CD4-positive, alpha-beta T cell (primary cell): ENCODE measurements at regions of chr15 and their contacts with region 1.

Region 1: GRCh38 chr15:100264994-100265673 is 76.6 kb downstream of the ADAMTS17 start:
- DNase-seq: no peak
- ATAC-seq: no peak
- H3K4me3 ChIP-seq: no peak overlapping the region
- H3K4me3 Mint-ChIP-seq: no peak overlapping the region
- H3K27ac ChIP-seq: no peak overlapping the region
- H3K27ac Mint-ChIP-seq: no peak overlapping the region
- H3K4me1 ChIP-seq: no peaks in the 10 kb centered on the region
- H3K4me1 Mint-ChIP-seq: no peaks in the 10 kb centered on the region
- H3K27me3 ChIP-seq: no peaks in the 10 kb centered on the region
- H3K27me3 Mint-ChIP-seq: no peaks in the 10 kb centered on the region
- CTCF ChIP-seq: no peak

Region 2: DNA sequence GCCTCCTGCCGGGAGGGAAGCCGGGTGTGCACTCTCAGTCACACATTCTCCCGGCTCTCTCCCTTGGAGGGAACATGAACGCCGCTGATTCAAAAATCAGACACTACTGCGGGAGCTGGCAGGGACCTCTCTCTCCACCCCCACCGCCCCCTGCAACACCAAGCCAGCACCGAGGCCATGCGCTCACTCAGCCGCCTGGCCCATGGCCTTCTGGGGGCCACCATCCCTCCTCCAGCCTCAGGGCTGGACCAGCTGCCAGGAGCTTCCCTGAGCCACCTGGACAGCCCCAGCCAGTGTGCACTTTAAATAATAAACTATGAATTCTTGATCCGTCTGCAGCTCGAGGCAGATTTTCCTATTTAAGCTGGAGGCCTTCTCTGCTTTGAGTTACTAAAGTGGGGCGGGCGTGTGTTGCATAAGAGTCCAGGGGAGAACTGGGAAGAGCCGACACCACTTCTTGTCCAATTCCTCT is 46.1 kb after region 1 on chr15:
- CTCF ChIA-PET with region 1: no interaction called
- POLR2A ChIA-PET with region 1: no interaction called
- intact Hi-C with region 1: loop called in 1 of 2 experiments (anchors 5 kb)
- DNase-seq: no peak
- ATAC-seq: no peak
- H3K4me3 ChIP-seq: no peak overlapping the region
- H3K4me3 Mint-ChIP-seq: no peak overlapping the region
- H3K27ac ChIP-seq: no peak overlapping the region
- H3K27ac Mint-ChIP-seq: no peak overlapping the region
- H3K4me1 ChIP-seq: no peaks in the 10 kb centered on the region
- H3K4me1 Mint-ChIP-seq: peaks cover 10% of the 10 kb centered on the region
- H3K27me3 ChIP-seq: no peaks in the 10 kb centered on the region
- H3K27me3 Mint-ChIP-seq: no peaks in the 10 kb centered on the region
- CTCF ChIP-seq: no peak

Region 3: GRCh38 chr15:100790786-100791265 is 525.7 kb after region 1 on chr15:
- CTCF ChIA-PET with region 1: no interaction called
- POLR2A ChIA-PET with region 1: no interaction called
- intact Hi-C with region 1: no loop called
- DNase-seq: no peak
- ATAC-seq: no peak
- H3K4me3 ChIP-seq: no peak overlapping the region
- H3K4me3 Mint-ChIP-seq: no peak overlapping the region
- H3K27ac ChIP-seq: no peak overlapping the region
- H3K27ac Mint-ChIP-seq: no peak overlapping the region
- H3K4me1 ChIP-seq: no peaks in the 10 kb centered on the region
- H3K4me1 Mint-ChIP-seq: no peaks in the 10 kb centered on the region
- H3K27me3 ChIP-seq: peaks cover 0 to 7% of the 10 kb centered on the region in 2 experiments
- H3K27me3 Mint-ChIP-seq: peaks cover 21% of the 10 kb centered on the region
- CTCF ChIP-seq: no peak